Left ventricle myocardium superior (tissue), 1 donor: ENCODE measurements at regions of chr6 and their contacts with region 1.

Region 1: DNA sequence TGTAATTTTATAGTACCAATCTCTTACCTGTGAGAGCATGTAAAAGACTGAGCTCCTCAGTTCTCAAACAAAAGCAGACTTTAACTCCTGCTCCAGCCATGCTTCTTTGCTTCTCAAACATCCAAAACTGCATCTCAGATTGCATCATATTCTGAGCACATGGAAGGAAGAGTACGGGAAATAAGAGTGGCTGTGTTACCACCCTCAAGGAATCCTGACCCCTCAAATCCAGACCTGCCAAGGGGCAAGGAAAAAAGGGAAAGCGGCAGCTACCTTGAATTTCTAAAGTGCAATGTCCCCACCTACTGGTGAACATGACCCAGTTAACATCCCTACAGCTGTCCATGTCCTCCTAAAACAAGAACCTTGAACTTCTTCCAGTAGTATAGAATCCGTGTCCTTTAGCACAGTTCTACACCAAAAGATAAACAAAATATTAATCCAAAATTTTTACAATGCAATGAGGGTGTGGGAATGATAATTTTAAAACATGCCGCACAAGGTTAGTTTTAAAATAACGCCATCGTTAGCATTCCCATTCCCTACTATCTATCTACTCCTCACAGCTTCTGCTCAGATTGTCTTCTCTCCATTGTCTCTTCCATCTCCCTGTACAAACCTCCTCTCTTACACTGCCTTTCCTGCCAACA is 34.1 kb upstream of the HLA-DQB1 start:
- DNase-seq: no peak
- ATAC-seq: peak; percentile 69

Region 2: GRCh38 chr6:32432050-32432450 is 268.5 kb before region 1 on chr6:
- intact Hi-C with region 1: loop called (anchors 5 kb)
- DNase-seq: no peak
- ATAC-seq: no peak